T-cell (primary cell): ENCODE measurements at regions of chr6 and their contacts with region 1.

Region 1: DNA sequence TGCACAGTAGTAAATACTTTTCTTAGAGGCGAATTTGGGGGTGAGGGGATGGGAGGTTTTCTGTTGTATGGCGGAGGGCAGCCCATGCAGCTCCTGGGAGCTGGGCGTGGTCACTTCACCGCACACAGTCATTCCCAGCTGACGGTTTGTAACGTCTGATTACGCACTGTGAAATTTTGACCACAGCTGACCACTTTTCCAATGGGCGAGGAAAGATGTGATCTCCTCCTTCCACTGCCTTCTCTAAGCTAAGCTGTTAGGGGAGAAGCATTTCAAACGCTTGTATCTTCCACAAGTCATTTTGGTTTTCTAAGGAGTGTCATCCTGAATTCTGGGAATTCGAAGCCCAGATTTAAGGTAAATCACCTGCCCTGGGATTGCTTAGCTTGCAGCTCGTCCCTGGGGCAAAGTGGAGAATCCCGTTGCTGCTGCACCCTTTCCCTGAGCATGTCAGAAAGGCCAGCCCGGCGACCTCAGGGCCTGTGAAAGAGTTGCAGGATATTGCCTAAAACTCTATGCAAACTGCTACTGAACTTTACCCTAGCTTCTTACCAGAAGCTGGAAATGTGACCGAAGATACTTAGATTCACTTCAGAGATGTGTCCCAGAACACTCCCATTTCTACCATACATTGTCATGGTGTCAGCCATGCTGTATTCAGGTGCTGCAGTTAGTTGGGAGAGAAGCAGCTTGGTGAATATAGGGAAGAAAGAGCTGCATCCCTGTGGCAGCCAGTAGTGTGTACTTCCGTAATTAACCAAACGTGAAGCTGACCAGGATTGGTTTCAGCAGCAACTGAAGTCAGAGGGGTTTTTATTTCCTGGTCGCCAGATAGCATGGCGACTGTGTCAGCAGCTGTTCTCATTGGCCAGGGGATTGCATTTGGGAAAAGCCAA is 58.9 kb downstream of the RREB1 start:
- DNase-seq: no peak
- ATAC-seq: no peak
- H3K4me3 ChIP-seq: no peak overlapping the region
- H3K4me3 Mint-ChIP-seq: no peak overlapping the region
- H3K27ac ChIP-seq: no peak overlapping the region
- H3K27ac Mint-ChIP-seq: no peak overlapping the region
- H3K4me1 ChIP-seq: peaks cover 6 to 19% of the 10 kb centered on the region in 2 experiments
- H3K4me1 Mint-ChIP-seq: peaks cover 66 to 81% (median 69%) of the 10 kb centered on the region in 3 donors
- H3K27me3 ChIP-seq: no peaks in the 10 kb centered on the region
- H3K27me3 Mint-ChIP-seq: no peaks in the 10 kb centered on the region

Region 2: DNA sequence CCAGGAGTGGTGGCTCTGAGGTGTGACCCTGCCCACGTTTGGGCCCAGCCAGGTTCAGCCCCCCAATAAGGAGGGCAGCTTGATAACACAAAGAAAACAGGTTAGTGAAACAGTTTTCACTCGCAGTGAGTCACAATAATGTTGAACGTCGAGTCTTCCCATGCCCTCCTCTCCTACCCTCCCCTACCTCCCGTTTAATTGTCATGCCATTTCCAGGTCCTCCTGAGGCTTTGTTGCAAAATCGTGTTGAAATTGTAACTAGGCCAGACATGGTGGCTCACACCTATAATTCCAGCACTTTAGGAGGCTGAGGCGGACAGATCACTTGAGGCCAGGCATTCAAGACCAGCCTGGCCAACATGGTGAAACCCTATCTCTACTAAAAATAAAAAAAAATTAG is 10.0 kb after region 1 on chr6:
- CTCF ChIA-PET with region 1: no interaction called
- POLR2A ChIA-PET with region 1: no interaction called
- DNase-seq: no peak
- ATAC-seq: no peak
- H3K4me3 ChIP-seq: no peak overlapping the region
- H3K4me3 Mint-ChIP-seq: no peak overlapping the region
- H3K27ac ChIP-seq: no peak overlapping the region
- H3K27ac Mint-ChIP-seq: no peak overlapping the region
- H3K4me1 ChIP-seq: peaks cover 0 to 4% of the 10 kb centered on the region in 2 experiments
- H3K4me1 Mint-ChIP-seq: peaks cover 2 to 17% (median 14%) of the 10 kb centered on the region in 3 donors
- H3K27me3 ChIP-seq: no peaks in the 10 kb centered on the region
- H3K27me3 Mint-ChIP-seq: no peaks in the 10 kb centered on the region

Region 3: DNA sequence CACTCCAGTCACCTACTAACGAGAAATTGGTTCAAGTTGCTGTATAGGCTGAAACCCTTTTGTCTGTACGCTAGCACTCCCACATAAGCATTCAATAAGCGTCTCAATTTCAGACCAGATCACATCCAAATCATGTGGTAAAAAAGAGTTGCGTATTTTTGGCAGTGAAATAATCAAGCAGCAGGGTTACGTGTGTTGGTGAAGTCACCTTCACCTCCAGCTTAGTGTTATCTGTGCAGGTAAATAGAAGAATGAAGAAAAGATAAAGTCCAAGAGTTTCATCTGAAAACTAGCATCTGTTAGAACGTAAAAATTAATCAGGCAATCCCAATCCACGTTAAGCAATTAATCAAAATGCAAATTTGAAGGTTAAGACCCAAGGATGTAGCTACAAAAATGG is 135.0 kb after region 1 on chr6:
- CTCF ChIA-PET with region 1: no interaction called
- POLR2A ChIA-PET with region 1: interaction called in 1 of 2 experiments, 10 read pairs
- DNase-seq: no peak
- ATAC-seq: no peak
- H3K4me3 ChIP-seq: no peak overlapping the region
- H3K4me3 Mint-ChIP-seq: no peak overlapping the region
- H3K27ac ChIP-seq: no peak overlapping the region
- H3K27ac Mint-ChIP-seq: no peak overlapping the region
- H3K4me1 ChIP-seq: no peaks in the 10 kb centered on the region
- H3K4me1 Mint-ChIP-seq: peaks cover 21 to 34% (median 31%) of the 10 kb centered on the region in 3 donors
- H3K27me3 ChIP-seq: no peaks in the 10 kb centered on the region
- H3K27me3 Mint-ChIP-seq: no peaks in the 10 kb centered on the region